ENCODE measurements at regions of chr4 and their contacts with region 1.

Region 1: GRCh38 chr4:37802068-37802666 is 24.3 kb upstream of the PGM2 start:
- DNase-seq: peak in 2 of 3 donors; percentile 32 to 58
- ATAC-seq: peak; percentile 85 to 91
- H3K4me3 ChIP-seq: no peak overlapping the region
- H3K27ac ChIP-seq: no peak overlapping the region
- H3K4me1 ChIP-seq: no peaks in the 10 kb centered on the region
- H3K27me3 ChIP-seq: no peaks in the 10 kb centered on the region

Region 2: GRCh38 chr4:37549041-37549440 is 253.1 kb before region 1 on chr4:
- intact Hi-C with region 1: no loop called
- DNase-seq: no peak
- ATAC-seq: no peak
- H3K4me3 ChIP-seq: no peak overlapping the region
- H3K27ac ChIP-seq: no peak overlapping the region
- H3K4me1 ChIP-seq: no peaks in the 10 kb centered on the region
- H3K27me3 ChIP-seq: no peaks in the 10 kb centered on the region

Region 3: DNA sequence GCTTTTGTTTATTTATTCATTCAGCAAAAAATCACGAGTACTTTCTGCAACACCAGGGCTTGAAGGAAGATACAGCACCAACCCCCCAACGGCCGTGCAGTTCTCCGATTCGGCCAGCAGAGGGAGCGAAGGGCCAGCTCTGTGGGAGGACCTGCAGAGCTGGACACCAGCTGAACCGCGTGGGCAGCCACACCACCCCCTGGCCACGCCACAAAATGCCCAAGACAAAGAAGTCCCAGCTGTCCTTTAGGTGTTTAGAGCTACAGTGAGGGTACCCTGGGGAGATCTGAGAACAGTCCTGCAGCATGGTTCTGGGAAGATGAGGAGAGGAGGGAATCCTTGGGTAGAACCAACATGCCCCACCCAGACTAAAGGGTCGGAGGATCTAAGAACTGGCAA is 199.1 kb before region 1 on chr4:
- intact Hi-C with region 1: no loop called
- DNase-seq: peak; percentile 77 to 94 (median 94)
- ATAC-seq: peak; percentile 94
- H3K4me3 ChIP-seq: no peak overlapping the region
- H3K27ac ChIP-seq: no peak overlapping the region
- H3K4me1 ChIP-seq: no peaks in the 10 kb centered on the region
- H3K27me3 ChIP-seq: no peaks in the 10 kb centered on the region

Region 4: DNA sequence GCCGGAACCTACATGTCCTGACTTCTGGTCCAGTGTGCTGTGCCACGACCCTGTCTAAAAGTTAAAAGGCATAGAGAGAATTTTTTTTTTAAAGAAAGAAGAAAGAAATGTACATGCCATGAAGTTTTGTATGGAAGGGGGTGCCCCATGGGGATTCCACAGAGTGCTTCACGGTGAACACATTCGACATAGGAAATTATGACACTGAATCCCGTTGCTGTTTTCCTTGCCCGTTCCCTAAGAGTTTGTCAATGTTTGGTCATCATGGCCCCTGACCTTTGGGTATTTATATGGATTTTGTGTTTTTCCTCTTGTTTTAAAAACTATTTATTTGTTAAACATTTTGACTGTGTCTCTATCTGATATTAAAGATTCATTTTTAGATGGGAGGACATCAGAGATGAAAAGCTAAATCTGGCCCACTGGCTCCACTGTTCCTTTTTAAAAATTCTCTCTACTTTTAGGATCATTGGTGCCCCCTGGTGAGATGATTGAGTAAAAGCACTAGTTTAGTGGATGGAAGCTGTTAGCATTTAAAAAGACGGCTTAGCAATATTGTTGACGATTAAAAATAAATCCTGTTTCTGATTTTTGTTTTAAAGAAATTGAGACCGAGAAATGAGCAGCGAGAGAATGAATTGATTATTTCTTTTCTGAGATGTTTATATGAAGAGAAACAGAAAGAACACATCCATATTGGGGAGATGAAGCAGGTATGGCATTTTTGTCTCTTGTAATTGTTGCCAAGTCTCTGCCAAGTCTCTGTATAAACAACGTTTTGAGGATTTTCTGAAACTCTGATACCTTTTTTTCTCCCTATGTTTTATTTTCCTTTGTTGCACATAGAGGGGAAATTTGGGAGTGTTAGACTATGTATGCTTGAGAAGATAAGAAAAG is 233.1 kb after region 1 on chr4:
- intact Hi-C with region 1: loop called (anchors 5 to 10 kb)
- DNase-seq: no peak
- ATAC-seq: no peak
- H3K4me3 ChIP-seq: no peak overlapping the region
- H3K27ac ChIP-seq: no peak overlapping the region
- H3K4me1 ChIP-seq: no peaks in the 10 kb centered on the region
- H3K27me3 ChIP-seq: no peaks in the 10 kb centered on the region

Region 5: GRCh38 chr4:39527273-39528060 is 1725.3 kb after region 1 on chr4 and contains the start of gene UGDH:
- intact Hi-C with region 1: no loop called
- DNase-seq: peak; percentile 98 to 99 (median 99)
- ATAC-seq: peak; percentile 99
- H3K4me3 ChIP-seq: peak within 1 kb of the TSS; percentile 48
- H3K27ac ChIP-seq: peak within 1 kb of the TSS; percentile 86
- H3K4me1 ChIP-seq: no peaks in the 10 kb centered on the region
- H3K27me3 ChIP-seq: no peaks in the 10 kb centered on the region
- total RNA-seq, gene UGDH: 18.0 to 33.1 (median 22.6) TPM

Measured in right cardiac atrium (tissue), 5 donors.